ENCODE measurements at regions of chr3 and their contacts with region 1.

Region 1: GRCh38 chr3:38346587-38347410 is at the start of gene XYLB:
- DNase-seq: peak; percentile 87
- H3K4me3 ChIP-seq: peak within 1 kb of the TSS; percentile 93
- H3K27ac ChIP-seq: peak within 1 kb of the TSS; percentile 68
- H3K4me1 ChIP-seq: peaks cover 18% of the 10 kb centered on the region
- H3K27me3 ChIP-seq: no peaks in the 10 kb centered on the region
- CTCF ChIP-seq: peak; percentile 92
- total RNA-seq, gene XYLB: 0.91 TPM

Region 2: DNA sequence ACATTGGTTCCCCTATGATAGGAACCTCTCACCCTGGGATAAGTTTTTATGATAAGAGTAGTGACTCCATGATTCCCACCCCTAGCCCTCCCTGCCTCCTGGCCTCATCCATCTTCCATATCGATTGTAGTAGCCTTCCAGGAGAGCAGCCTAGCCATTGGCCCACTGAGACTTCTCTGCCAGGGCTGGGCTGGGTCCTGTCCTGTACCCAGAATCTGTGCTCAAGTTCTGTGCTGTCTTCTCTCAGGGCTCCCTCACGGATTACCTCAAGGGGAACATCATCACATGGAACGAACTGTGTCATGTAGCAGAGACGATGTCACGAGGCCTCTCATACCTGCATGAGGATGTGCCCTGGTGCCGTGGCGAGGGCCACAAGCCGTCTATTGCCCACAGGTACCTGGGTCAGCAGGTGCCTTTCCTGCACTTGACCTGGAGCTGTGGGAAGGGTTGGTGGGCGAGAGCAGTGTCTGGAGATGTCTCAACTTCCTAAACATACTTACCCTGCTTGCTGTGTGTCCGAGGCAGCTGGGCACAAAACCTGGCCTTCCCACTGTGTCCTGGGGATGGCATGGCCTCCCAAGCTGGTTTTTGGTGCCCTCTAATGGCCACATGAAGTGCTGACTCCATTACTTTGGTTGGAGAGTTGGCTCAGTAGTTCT is 132.8 kb after region 1 on chr3:
- intact Hi-C with region 1: loop called (anchors 5 kb)
- DNase-seq: peak; percentile 48
- H3K4me3 ChIP-seq: no peak overlapping the region
- H3K27ac ChIP-seq: no peak overlapping the region
- H3K4me1 ChIP-seq: no peaks in the 10 kb centered on the region
- H3K27me3 ChIP-seq: no peaks in the 10 kb centered on the region
- CTCF ChIP-seq: peak; percentile 92

Region 3: GRCh38 chr3:38528457-38528856 is 181.7 kb after region 1 on chr3:
- intact Hi-C with region 1: no loop called
- DNase-seq: no peak
- H3K4me3 ChIP-seq: no peak overlapping the region
- H3K27ac ChIP-seq: peak overlapping the region; percentile 50
- H3K4me1 ChIP-seq: peaks cover 46% of the 10 kb centered on the region
- H3K27me3 ChIP-seq: no peaks in the 10 kb centered on the region
- CTCF ChIP-seq: peak; percentile 21

Region 4: DNA sequence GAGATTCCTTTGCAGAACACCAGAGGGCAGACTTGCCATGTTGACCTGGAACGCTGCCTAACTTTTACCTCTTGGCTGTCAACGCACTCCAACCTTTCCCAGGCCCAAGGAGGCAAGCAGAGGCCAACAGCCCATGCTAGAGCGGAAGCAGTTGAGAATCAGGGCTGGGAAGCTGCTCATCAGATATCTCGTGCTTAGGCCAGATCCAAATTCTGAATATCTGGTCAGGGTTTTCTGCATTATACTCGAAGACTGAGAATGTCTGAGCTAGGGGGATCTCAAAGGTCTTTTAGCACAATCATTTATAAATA is 843.1 kb after region 1 on chr3:
- intact Hi-C with region 1: no loop called
- DNase-seq: no peak
- H3K4me3 ChIP-seq: peak overlapping the region; percentile 67
- H3K27ac ChIP-seq: peak overlapping the region; percentile 89
- H3K4me1 ChIP-seq: peaks cover 67% of the 10 kb centered on the region
- H3K27me3 ChIP-seq: no peaks in the 10 kb centered on the region
- CTCF ChIP-seq: peak; percentile 84